PC-9 (cell line): ENCODE measurements at regions of chr16 and their contacts with region 1.

Region 1: DNA sequence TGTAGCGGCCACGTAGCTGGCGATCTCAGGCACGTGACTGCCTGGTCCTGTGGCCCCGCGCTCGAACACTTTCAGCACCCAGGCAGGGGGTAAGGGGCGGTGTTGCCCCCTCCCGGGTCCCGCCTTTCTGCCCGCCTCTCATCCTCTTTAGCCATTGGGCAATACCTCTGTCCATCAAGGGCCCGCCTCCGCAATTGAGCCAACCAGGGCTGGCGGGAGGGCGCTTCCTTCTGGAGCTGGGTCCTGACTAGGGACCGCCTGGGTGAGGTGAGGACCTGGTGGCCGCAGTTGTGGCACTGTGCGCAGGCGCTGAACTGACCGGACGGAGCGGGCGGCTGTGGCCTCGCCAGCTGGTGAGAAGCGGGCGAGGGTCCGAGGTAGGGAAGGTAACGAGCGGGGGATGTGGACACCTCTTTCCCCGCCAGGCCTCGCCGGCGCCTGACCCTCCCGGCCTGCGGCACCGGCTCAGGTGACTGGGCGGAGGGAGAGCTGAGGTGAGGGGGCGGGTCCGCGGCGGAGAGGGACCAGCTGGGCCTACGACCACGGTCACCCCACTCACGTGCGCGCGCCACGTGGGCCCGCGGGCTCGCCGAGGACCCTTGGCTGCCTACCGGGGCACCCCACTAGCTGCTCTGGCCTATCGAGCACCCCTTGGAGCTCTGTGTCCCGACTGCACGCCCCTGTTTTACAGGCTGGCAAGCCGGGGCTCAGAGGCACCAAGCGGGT is at the start of gene PDP2:
- DNase-seq: peak; percentile 86 to 95
- H3K4me3 ChIP-seq: peak within 1 kb of the TSS; percentile 99
- H3K27ac ChIP-seq: no peak within 1 kb of the TSS
- H3K4me1 ChIP-seq: peaks cover 13% of the 10 kb centered on the region; the same call in 1 of the 2 replicates
- H3K27me3 ChIP-seq: no peaks in the 10 kb centered on the region
- CTCF ChIP-seq: no peak
- total RNA-seq, gene PDP2: 17.4 and 21.6 TPM in 2 replicates

Region 2: GRCh38 chr16:66660422-66661209 is 219.8 kb before region 1 on chr16:
- CTCF ChIA-PET with region 1: no interaction called
- POLR2A ChIA-PET with region 1: no interaction called
- intact Hi-C with region 1: loop called (anchors 5 kb)
- DNase-seq: peak in 1 of 2 experiments; percentile 69
- H3K4me3 ChIP-seq: no peak overlapping the region
- H3K27ac ChIP-seq: peak overlapping the region; percentile 49; the same call in 1 of the 2 replicates
- H3K4me1 ChIP-seq: no peaks in the 10 kb centered on the region
- H3K27me3 ChIP-seq: no peaks in the 10 kb centered on the region
- CTCF ChIP-seq: no peak

Region 3: GRCh38 chr16:66810391-66810790 is 70.1 kb before region 1 on chr16:
- CTCF ChIA-PET with region 1: no interaction called
- POLR2A ChIA-PET with region 1: no interaction called
- intact Hi-C with region 1: no loop called
- DNase-seq: no peak
- H3K4me3 ChIP-seq: no peak overlapping the region
- H3K27ac ChIP-seq: no peak overlapping the region
- H3K4me1 ChIP-seq: no peaks in the 10 kb centered on the region
- H3K27me3 ChIP-seq: no peaks in the 10 kb centered on the region
- CTCF ChIP-seq: no peak

Region 4: GRCh38 chr16:66830422-66831404 is 49.7 kb before region 1 on chr16 and contains the start of gene NAE1:
- CTCF ChIA-PET with region 1: interaction called, 10 read pairs
- POLR2A ChIA-PET with region 1: no interaction called
- intact Hi-C with region 1: no loop called
- DNase-seq: peak; percentile 68 to 88
- H3K4me3 ChIP-seq: peak within 1 kb of the TSS; percentile 95
- H3K27ac ChIP-seq: peak within 1 kb of the TSS; percentile 61; the same call in 1 of the 2 replicates
- H3K4me1 ChIP-seq: peaks cover 36% of the 10 kb centered on the region
- H3K27me3 ChIP-seq: no peaks in the 10 kb centered on the region
- CTCF ChIP-seq: peak; percentile 91
- total RNA-seq, gene NAE1: 66.8 and 72.7 TPM in 2 replicates